Mammary epithelial cell (primary cell): ENCODE measurements at regions of chr7 and their contacts with region 1.

Region 1: GRCh38 chr7:135102372-135102771 is 45.5 kb upstream of the TMEM140 start:
- DNase-seq: no peak
- H3K4me3 ChIP-seq: no peak overlapping the region
- H3K27ac ChIP-seq: no peak overlapping the region
- H3K4me1 ChIP-seq: no peaks in the 10 kb centered on the region
- H3K27me3 ChIP-seq: peaks cover 2% of the 10 kb centered on the region
- CTCF ChIP-seq: no peak

Region 2: DNA sequence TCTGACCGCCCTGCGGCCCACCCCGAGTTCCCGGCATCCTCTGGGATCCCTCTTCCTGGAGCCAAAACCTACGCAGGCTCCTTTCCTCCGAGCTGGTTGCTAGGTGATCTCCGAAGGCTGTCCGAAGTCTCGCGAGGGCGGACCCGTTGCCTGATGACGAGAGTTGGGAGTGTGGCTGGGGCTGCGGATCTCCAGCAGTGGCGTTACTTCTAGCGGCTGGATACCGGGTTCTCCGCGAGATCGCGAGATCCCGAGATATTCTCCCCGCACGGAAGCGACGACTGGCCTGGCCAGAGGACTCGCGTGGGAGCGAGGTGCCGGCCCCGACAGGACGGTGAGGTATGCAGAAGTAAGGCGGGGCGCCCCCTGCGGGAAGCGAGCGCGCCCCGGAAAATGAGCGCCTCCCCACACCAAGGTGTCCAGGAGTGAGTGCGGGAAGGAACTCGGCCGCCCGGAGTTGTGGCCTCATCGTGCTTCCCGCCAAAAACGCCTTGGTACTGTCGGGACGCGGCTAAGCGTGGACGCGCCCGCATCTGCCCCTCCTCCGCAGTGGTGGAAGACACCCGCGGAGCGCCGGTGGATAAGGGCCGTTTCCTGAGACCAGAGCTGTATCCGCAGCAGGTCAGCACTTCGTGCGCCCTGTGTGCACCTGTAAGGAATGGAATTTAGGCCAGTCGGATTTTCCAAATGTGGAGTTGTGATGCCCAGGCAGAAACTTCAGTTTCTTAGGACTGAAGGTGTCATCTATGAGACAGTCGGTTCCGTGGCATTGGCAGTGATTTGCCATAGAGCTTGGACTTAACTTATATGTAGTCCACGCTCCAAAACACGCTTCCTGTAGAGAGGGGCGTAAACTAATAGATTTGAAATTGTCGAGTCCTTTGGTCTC is 115.8 kb before region 1 on chr7 and contains the start of gene AGBL3:
- CTCF ChIA-PET with region 1: interaction called, 13 read pairs
- dilution Hi-C with region 1: no loop called
- in situ Hi-C with region 1: no loop called
- intact Hi-C with region 1: no loop called
- DNase-seq: peak; percentile 88
- H3K4me3 ChIP-seq: peak within 1 kb of the TSS; percentile 70 to 86 (median 71)
- H3K27ac ChIP-seq: peak within 1 kb of the TSS; percentile 64
- H3K4me1 ChIP-seq: no peaks in the 10 kb centered on the region
- H3K27me3 ChIP-seq: no peaks in the 10 kb centered on the region
- CTCF ChIP-seq: peak; percentile 28 to 72
- total RNA-seq, gene AGBL3: 0.61 to 1.2 TPM